ENCODE measurements at regions of chr6 and their contacts with region 1.

Region 1: GRCh38 chr6:31971993-31972708 is at the start of gene DXO:
- DNase-seq: peak; percentile 80 to 98
- H3K4me3 ChIP-seq: peak within 1 kb of the TSS; percentile 68 to 94 (median 84)
- H3K27ac ChIP-seq: peak within 1 kb of the TSS; percentile 90
- H3K4me1 ChIP-seq: peaks cover 0 to 9% (median 5%) of the 10 kb centered on the region in 4 experiments; a peak in 5 of 7 replicates
- H3K27me3 ChIP-seq: no peaks in the 10 kb centered on the region; a peak in 1 of 7 replicates
- CTCF ChIP-seq: no peak
- EP300 ChIP-seq: no peak
- POLR2A ChIP-seq: peak in 1 of 2 experiments; percentile 79; a peak in 2 of 3 replicates
- RAD21 ChIP-seq: no peak
- total RNA-seq, gene DXO: 14.7 and 16.2 TPM in 2 replicates

Region 2: DNA sequence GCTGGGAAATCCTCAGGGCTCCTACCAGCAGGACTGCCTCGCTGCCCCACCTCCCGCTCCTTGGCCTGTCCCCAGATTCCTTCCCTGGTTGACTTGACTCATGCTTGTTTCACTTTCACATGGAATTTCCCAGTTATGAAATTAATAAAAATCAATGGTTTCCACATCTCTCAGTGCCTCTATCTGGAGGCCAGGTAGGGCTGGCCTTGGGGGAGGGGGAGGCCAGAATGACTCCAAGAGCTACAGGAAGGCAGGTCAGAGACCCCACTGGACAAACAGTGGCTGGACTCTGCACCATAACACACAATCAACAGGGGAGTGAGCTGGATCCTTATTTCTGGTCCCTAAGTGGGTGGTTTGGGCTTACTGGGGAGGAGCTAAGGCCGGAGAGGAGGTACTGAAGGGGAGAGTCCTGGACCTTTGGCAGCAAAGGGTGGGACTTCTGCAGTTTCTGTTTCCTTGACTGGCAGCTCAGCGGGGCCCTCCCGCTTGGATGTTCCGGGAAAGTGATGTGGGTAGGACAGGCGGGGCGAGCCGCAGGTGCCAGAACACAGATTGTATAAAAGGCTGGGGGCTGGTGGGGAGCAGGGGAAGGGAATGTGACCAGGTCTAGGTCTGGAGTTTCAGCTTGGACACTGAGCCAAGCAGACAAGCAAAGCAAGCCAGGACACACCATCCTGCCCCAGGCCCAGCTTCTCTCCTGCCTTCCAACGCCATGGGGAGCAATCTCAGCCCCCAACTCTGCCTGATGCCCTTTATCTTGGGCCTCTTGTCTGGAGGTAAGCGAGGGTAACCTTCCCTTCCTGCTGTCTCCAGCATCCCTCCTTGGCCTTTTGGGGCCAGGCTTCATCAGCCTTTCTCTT is 26.4 kb before region 1 on chr6 and contains the start of gene CFB:
- CTCF ChIA-PET with region 1: interaction called, 84 read pairs
- POLR2A ChIA-PET with region 1: interaction called, 279 read pairs
- DNase-seq: no peak
- H3K4me3 ChIP-seq: no peak within 1 kb of the TSS
- H3K27ac ChIP-seq: no peak within 1 kb of the TSS
- H3K4me1 ChIP-seq: peaks cover 0 to 2% (median 0%) of the 10 kb centered on the region in 4 experiments; a peak in 1 of 7 replicates
- H3K27me3 ChIP-seq: peaks cover 0 to 11% (median 2%) of the 10 kb centered on the region in 4 experiments; a peak in 3 of 7 replicates
- CTCF ChIP-seq: no peak
- EP300 ChIP-seq: no peak
- POLR2A ChIP-seq: no peak
- RAD21 ChIP-seq: no peak
- total RNA-seq, gene CFB: not detected in 2 replicates

Region 3: DNA sequence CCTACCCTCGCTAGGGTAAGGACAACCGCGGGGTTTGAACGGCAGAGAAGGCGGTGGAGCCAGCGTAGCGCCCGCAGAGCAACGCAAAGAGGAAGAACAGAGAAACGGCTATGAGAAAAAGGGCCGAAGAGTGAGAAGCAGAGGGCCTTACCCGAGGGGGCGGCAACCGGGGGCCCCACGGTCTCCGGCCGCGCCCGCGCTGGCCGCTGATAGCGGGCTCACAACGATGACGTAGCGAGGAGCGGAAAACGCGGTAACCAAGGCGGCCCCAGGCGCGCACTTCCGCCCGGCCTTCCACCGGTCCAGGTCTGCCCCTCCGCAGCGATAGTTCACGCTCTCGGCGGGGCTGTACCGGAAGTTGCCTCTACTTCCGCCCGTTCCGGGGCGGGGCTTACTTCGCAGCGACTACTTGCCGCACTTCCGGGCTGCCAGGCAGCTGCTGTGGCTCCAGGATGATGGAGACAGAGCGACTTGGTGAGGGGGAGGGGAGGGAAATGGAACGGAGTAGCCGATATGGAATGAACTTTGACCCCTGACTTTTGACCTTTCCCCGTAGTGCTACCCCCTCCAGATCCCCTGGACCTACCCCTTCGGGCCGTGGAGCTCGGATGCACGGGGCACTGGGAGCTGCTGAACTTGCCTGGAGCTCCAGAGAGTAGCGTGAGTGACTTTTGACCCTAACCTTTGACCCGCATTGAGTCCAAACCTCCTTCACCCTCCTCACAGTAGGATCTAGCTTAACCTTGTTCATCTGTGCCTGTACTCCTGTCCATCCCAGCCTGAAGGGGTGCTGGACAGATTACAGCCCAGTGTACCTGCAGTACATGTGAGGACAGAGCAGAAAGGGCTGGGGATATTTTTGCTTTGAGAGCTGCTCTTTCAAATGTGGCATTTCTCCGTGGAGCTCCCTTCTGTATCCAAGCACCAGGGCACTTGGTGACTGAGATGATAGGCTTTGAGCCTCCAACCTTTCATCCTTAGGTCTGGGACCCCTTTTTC is 13.1 kb before region 1 on chr6 and contains the starts of genes NELFE and SKIC2:
- CTCF ChIA-PET with region 1: interaction called, 84 read pairs
- POLR2A ChIA-PET with region 1: interaction called, 279 read pairs
- DNase-seq: peak; percentile 94 to 97
- H3K4me3 ChIP-seq: peak within 1 kb of the TSS; percentile 96 to 99 (median 98)
- H3K27ac ChIP-seq: peak within 1 kb of the TSS; percentile 78
- H3K4me1 ChIP-seq: peaks cover 0 to 6% (median 3%) of the 10 kb centered on the region in 4 experiments; a peak in 3 of 7 replicates
- H3K27me3 ChIP-seq: no peaks in the 10 kb centered on the region
- CTCF ChIP-seq: peak in 1 of 3 experiments; percentile 5; a peak in 1 of 4 replicates
- EP300 ChIP-seq: 0 out of 3 replicates have a peak, but pooled peaks of 1 of the 2 experiments have one; percentile 59
- POLR2A ChIP-seq: peak in 1 of 2 experiments; percentile 75; a peak in 2 of 3 replicates
- RAD21 ChIP-seq: 0 out of 4 replicates have a peak, but pooled peaks of 1 of the 2 experiments have one; percentile 1
- total RNA-seq, gene NELFE: 71.1 and 71.5 TPM in 2 replicates
- total RNA-seq, gene SKIC2: 59.7 and 68.5 TPM in 2 replicates

Region 4: DNA sequence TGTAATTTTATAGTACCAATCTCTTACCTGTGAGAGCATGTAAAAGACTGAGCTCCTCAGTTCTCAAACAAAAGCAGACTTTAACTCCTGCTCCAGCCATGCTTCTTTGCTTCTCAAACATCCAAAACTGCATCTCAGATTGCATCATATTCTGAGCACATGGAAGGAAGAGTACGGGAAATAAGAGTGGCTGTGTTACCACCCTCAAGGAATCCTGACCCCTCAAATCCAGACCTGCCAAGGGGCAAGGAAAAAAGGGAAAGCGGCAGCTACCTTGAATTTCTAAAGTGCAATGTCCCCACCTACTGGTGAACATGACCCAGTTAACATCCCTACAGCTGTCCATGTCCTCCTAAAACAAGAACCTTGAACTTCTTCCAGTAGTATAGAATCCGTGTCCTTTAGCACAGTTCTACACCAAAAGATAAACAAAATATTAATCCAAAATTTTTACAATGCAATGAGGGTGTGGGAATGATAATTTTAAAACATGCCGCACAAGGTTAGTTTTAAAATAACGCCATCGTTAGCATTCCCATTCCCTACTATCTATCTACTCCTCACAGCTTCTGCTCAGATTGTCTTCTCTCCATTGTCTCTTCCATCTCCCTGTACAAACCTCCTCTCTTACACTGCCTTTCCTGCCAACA is 728.4 kb after region 1 on chr6:
- CTCF ChIA-PET with region 1: no interaction called
- POLR2A ChIA-PET with region 1: no interaction called
- DNase-seq: peak; percentile 34 to 53
- H3K4me3 ChIP-seq: no peak overlapping the region
- H3K27ac ChIP-seq: no peak overlapping the region
- H3K4me1 ChIP-seq: no peaks in the 10 kb centered on the region
- H3K27me3 ChIP-seq: no peaks in the 10 kb centered on the region
- CTCF ChIP-seq: peak; percentile 13 to 74 (median 69)
- EP300 ChIP-seq: no peak
- POLR2A ChIP-seq: no peak
- RAD21 ChIP-seq: peak; percentile 88 to 89

Measured in H1 (cell line).